ENCODE measurements at regions of chr2 and their contacts with region 1.

Region 1: GRCh38 chr2:39408316-39409136 is 28.6 kb downstream of the MAP4K3 start:
- DNase-seq: no peak
- H3K4me3 Mint-ChIP-seq: no peak overlapping the region
- H3K27ac Mint-ChIP-seq: peak overlapping the region; percentile 59
- H3K4me1 Mint-ChIP-seq: peaks cover 47% of the 10 kb centered on the region
- H3K27me3 Mint-ChIP-seq: no peaks in the 10 kb centered on the region
- CTCF ChIP-seq: no peak

Region 2: DNA sequence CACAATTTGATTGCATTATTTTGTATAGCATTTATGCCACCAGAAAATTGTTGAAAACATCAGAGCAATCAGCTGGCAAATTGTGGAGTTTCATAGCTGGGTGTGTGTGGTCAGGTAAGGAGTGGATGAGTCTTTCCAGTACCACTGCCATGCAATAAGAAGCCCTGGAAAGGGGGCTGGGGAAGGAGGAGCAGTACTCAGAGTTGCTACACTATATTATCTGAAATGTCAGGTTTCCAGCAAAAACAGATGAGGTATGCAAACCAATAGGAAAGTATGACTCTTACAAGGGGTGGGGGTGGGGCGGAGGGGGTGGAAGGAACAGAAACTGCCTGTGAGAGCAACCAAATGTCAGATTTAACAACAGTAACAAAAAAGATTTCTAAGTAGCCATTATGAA is 399.9 kb before region 1 on chr2:
- CTCF ChIA-PET with region 1: no interaction called
- POLR2A ChIA-PET with region 1: no interaction called
- intact Hi-C with region 1: no loop called
- DNase-seq: no peak
- H3K4me3 Mint-ChIP-seq: no peak overlapping the region
- H3K27ac Mint-ChIP-seq: peak overlapping the region; percentile 54
- H3K4me1 Mint-ChIP-seq: peaks cover 5% of the 10 kb centered on the region
- H3K27me3 Mint-ChIP-seq: no peaks in the 10 kb centered on the region
- CTCF ChIP-seq: no peak

Region 3: DNA sequence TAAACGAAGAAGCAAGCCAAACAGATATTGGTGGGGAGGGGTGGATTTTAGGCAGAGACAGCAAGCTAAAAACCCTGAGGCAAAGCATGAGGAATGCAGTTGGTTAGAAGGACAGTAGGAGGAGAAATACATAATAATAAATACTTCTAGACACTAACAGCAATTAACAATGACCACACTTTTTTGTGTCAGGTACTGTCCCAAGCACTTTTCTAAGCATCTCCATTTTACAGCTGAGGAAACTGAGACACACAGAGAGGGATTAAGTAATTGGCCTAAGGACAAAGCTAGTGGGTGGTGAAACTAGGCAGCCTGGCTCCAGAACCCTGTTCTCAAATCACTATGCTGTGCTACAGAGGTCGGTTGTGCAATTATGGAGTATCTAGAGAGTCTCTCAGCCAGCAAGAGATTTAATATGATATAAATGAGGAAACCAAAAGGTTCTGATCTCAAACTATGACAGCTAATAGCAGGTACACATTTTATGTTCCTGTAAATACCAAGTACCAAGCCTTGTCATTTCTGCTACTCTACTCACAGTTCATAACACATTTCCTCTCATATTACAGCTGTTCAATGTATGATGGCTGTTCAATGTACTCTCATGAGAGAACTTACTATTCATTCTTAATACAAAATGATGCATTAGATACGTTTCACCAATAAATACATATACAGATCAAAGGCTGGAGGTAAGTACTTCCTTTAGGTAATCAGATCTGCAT is 23.2 kb after region 1 on chr2:
- CTCF ChIA-PET with region 1: interaction called, 4 read pairs
- POLR2A ChIA-PET with region 1: interaction called, 21 read pairs
- intact Hi-C with region 1: no loop called
- DNase-seq: peak; percentile 71
- H3K4me3 Mint-ChIP-seq: peak overlapping the region; percentile 35
- H3K27ac Mint-ChIP-seq: peak overlapping the region; percentile 80
- H3K4me1 Mint-ChIP-seq: peaks cover 54% of the 10 kb centered on the region
- H3K27me3 Mint-ChIP-seq: no peaks in the 10 kb centered on the region
- CTCF ChIP-seq: no peak

Region 4: GRCh38 chr2:39608686-39609441 is 200.3 kb after region 1 on chr2:
- CTCF ChIA-PET with region 1: no interaction called
- POLR2A ChIA-PET with region 1: no interaction called
- intact Hi-C with region 1: no loop called
- DNase-seq: no peak
- H3K4me3 Mint-ChIP-seq: no peak overlapping the region
- H3K27ac Mint-ChIP-seq: no peak overlapping the region
- H3K4me1 Mint-ChIP-seq: no peaks in the 10 kb centered on the region
- H3K27me3 Mint-ChIP-seq: no peaks in the 10 kb centered on the region
- CTCF ChIP-seq: no peak

Measured in MCF 10A (cell line).